CD14-positive monocyte (primary cell): ENCODE measurements at regions of chr3 and their contacts with region 1.

Region 1: GRCh38 chr3:100254168-100254777 is 6.5 kb upstream of the TBC1D23 start:
- DNase-seq: peak; percentile 3 to 41 (median 37)
- H3K4me3 ChIP-seq: no peak overlapping the region
- H3K4me3 Mint-ChIP-seq: no peak overlapping the region
- H3K27ac ChIP-seq: no peak overlapping the region
- H3K27ac Mint-ChIP-seq: no peak overlapping the region
- H3K4me1 ChIP-seq: no peaks in the 10 kb centered on the region
- H3K4me1 Mint-ChIP-seq: no peaks in the 10 kb centered on the region
- H3K27me3 ChIP-seq: no peaks in the 10 kb centered on the region
- H3K27me3 Mint-ChIP-seq: peaks cover 0 to 2% (median 0%) of the 10 kb centered on the region in 3 donors
- CTCF ChIP-seq: peak; percentile 39

Region 2: DNA sequence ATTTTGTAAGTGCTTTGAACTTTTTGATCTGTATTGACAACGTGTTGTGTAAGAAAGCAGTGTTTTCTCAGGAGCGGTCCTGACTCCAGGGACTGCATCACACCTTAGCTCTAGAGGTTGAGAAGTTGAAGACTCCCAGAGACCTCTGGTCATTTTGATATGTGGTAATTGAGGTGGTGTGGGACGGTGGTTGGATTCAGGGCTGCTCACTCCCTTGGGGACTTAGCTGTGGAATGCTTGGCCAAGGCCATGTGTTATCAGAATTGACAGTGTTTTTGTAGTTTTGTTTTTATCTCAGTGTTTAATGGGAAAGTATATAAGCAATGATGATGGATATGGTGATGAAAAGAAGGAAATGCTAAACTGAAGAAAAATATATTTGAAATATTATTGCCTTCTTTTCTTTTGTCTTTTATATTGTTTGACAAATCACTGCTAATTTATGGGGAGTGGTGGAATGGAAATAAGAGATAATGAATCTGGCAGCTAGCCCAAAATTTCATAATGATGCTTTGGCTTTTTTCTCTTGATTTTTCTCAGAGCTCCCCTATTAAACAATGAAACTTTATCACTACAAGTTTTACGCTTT is 420.6 kb before region 1 on chr3:
- intact Hi-C with region 1: loop called in 1 of 2 experiments (anchors 10 kb)
- DNase-seq: no peak
- H3K4me3 ChIP-seq: no peak overlapping the region
- H3K4me3 Mint-ChIP-seq: no peak overlapping the region
- H3K27ac ChIP-seq: no peak overlapping the region
- H3K27ac Mint-ChIP-seq: no peak overlapping the region
- H3K4me1 ChIP-seq: no peaks in the 10 kb centered on the region
- H3K4me1 Mint-ChIP-seq: no peaks in the 10 kb centered on the region
- H3K27me3 ChIP-seq: no peaks in the 10 kb centered on the region
- H3K27me3 Mint-ChIP-seq: no peaks in the 10 kb centered on the region
- CTCF ChIP-seq: no peak

Region 3: DNA sequence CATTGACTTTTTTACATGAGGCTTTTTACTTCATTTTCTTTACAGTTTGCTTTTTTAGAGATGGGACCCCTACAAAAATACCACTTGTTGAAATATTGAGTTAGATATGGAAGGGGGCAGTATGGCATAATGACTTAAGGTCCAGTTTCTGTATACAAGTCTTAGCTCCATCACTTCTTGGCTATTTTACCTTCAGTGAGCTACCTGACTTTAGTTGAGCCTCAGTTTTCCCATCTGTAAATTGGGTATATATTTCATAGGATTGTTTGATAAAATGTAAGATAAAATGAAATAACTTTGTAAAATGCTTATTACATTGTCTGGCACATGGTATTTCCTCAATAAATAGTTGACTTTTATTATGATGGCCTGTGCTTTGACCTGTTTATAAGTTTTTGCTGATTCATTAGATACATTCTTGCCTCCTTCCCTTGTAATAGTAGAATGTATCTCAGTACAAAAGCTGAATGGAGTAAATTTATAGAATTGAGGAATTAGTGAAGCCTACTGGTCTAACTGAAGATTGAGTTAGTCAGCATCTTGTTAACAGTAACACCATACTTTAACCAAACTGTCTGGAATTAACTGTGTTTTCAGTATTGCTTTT is 34.1 kb after region 1 on chr3:
- intact Hi-C with region 1: no loop called
- DNase-seq: no peak
- H3K4me3 ChIP-seq: no peak overlapping the region
- H3K4me3 Mint-ChIP-seq: no peak overlapping the region
- H3K27ac ChIP-seq: no peak overlapping the region
- H3K27ac Mint-ChIP-seq: no peak overlapping the region
- H3K4me1 ChIP-seq: peaks cover 0 to 5% of the 10 kb centered on the region in 2 donors
- H3K4me1 Mint-ChIP-seq: peaks cover 7% of the 10 kb centered on the region
- H3K27me3 ChIP-seq: no peaks in the 10 kb centered on the region
- H3K27me3 Mint-ChIP-seq: peaks cover 0 to 2% (median 2%) of the 10 kb centered on the region in 3 donors
- CTCF ChIP-seq: no peak

Region 4: DNA sequence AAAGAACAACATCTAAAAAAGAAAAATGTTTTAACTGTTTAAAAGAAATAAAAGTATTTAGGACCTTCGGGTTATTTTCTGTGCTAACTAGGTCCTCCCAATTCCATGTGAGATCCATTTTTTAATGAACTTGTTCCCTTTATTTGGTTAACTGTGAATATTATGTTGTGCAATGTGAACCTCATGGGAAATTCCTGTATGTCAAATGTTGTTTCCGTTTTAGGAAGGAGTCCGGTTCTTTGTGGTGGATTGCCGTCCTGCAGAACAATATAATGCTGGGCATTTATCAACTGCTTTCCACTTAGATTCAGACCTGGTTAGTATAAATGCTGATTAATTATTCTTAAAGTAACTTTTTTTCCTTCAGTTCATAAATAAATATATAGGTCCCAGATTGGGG is 44.7 kb after region 1 on chr3:
- intact Hi-C with region 1: no loop called
- DNase-seq: peak in 1 of 3 donors; percentile 64
- H3K4me3 ChIP-seq: no peak overlapping the region
- H3K4me3 Mint-ChIP-seq: no peak overlapping the region
- H3K27ac ChIP-seq: no peak overlapping the region
- H3K27ac Mint-ChIP-seq: peak overlapping the region in 1 of 7 donors; percentile 15
- H3K4me1 ChIP-seq: no peaks in the 10 kb centered on the region
- H3K4me1 Mint-ChIP-seq: no peaks in the 10 kb centered on the region
- H3K27me3 ChIP-seq: no peaks in the 10 kb centered on the region
- H3K27me3 Mint-ChIP-seq: no peaks in the 10 kb centered on the region
- CTCF ChIP-seq: no peak